ENCODE measurements at regions of chr2 and their contacts with region 1.

Region 1: DNA sequence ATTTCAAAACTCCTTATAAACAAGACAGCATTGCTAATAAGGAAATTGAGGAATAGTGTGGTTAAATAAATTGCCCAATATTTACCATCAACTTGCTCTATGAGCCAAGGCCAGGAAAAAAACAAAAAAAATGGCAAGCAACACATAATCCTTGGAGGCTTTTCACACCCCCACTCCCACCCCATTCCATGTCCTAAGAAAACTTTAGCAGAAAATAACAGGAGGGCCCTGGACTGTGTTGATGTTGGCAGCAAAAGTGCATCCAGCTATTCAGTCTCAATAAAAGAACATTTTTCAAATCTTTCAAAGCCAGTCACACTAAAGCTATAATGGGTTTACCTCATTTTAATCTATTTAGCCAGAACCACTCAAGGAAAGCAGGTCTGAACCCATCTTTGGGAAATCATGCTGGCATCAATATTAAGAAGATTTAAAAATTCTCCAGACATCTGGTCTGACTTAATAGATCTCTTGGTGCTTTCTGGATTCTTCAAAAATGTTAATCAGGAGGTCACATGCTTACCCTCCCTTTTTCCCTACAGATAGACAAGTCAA is 34.6 kb upstream of the STK17B start:
- DNase-seq: peak in 1 of 2 donors; percentile 58
- ATAC-seq: peak; percentile 68 to 77
- H3K4me3 ChIP-seq: no peak overlapping the region
- H3K27ac ChIP-seq: peak overlapping the region; percentile 1 to 47 (median 20)
- H3K4me1 ChIP-seq: peaks cover 0 to 6% of the 10 kb centered on the region in 2 donors
- H3K27me3 ChIP-seq: no peaks in the 10 kb centered on the region
- CTCF ChIP-seq: no peak
- POLR2A ChIP-seq: no peak

Region 2: DNA sequence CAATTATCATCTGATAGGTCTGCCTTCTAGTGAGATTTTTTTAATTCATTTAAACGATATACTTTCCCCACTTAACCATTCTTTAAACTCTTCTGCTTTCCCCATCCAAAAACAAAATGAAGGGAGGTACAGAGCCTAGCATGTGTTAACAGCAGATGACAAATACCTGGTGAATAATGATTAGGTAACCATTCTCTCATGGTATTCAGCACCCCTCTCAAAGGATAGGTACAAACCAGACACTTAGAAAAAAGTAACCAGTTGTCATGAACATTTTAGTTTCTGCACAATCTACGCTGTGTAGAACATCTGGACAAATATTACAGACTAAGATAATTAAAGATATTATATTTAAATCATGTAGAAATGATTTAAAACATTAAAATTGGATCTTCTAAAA is 193.6 kb before region 1 on chr2:
- in situ Hi-C with region 1: no loop called
- intact Hi-C with region 1: no loop called
- DNase-seq: no peak
- ATAC-seq: no peak
- H3K4me3 ChIP-seq: no peak overlapping the region
- H3K27ac ChIP-seq: no peak overlapping the region
- H3K4me1 ChIP-seq: no peaks in the 10 kb centered on the region
- H3K27me3 ChIP-seq: no peaks in the 10 kb centered on the region
- CTCF ChIP-seq: no peak
- POLR2A ChIP-seq: no peak

Region 3: DNA sequence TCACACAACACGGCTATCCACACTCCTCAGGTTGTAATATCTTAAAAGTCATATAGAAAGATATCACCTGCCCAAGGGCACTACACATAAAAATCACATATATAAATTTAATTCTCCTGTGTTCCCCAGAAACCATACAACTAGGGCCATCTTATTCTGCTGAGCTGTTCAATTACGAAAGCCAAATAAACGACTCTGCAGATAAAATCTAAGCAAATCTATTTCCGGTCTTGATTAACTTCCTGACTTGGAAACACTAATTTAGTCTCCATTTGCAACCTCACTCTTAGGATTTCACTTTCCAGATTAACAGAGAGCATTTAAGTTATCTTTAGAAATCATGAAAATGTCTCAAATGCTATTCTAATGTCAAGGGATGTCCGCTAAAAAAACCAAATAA is 10.7 kb before region 1 on chr2:
- in situ Hi-C with region 1: no loop called
- intact Hi-C with region 1: loop called (anchors 1 kb)
- DNase-seq: no peak
- ATAC-seq: no peak
- H3K4me3 ChIP-seq: no peak overlapping the region
- H3K27ac ChIP-seq: no peak overlapping the region
- H3K4me1 ChIP-seq: no peaks in the 10 kb centered on the region
- H3K27me3 ChIP-seq: no peaks in the 10 kb centered on the region
- CTCF ChIP-seq: no peak
- POLR2A ChIP-seq: no peak

Region 4: DNA sequence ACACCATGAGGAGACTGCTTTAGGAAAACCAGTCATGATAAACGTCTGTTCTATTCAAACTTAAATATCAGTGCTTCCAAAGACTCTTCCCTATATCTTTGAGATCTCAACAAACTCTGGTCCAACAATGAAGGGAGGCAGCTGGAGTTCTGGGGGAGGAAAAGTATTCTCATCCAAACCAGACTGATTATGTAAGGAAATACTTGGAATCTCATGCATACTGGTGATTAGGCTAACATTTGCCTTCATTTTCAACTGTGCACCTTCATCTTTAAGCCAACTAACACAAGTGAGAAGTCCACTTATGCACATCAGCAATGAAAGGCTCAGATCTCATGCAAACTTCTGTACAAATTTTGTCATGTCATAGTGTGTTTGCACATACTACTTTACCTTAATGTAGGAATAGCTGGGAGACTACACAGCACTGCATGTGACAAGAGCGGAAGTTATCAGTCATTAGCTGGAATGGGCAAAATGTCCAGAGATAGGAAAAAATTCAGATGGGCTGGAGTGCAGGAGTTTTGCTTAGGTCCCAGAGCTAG is 33.0 kb after region 1 on chr2:
- in situ Hi-C with region 1: no loop called
- intact Hi-C with region 1: no loop called
- DNase-seq: no peak
- ATAC-seq: no peak
- H3K4me3 ChIP-seq: no peak overlapping the region
- H3K27ac ChIP-seq: no peak overlapping the region
- H3K4me1 ChIP-seq: peaks cover 0 to 7% of the 10 kb centered on the region in 2 donors
- H3K27me3 ChIP-seq: no peaks in the 10 kb centered on the region
- CTCF ChIP-seq: no peak
- POLR2A ChIP-seq: no peak

Region 5: DNA sequence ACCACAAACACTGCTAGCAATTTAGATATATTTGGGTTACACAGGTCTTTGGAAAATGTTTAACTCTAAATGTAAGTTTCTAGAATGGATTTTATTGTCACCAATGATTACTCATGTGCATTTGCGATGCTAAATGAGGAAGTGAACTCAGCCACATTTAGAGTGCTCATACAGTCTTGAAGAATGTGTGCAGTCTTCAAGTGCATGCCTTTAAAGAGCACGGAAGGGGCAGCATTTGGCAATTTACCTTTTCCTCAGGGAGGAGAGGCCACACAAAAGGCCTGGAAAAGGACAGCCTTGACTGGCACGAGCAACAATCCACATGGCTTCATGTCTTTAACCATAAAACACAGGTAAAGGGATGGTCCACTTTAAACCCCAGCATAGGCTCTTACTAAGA is 43.9 kb after region 1 on chr2:
- in situ Hi-C with region 1: no loop called
- intact Hi-C with region 1: loop called (anchors 5 kb)
- DNase-seq: no peak
- ATAC-seq: no peak
- H3K4me3 ChIP-seq: no peak overlapping the region
- H3K27ac ChIP-seq: no peak overlapping the region
- H3K4me1 ChIP-seq: peaks cover 4 to 8% of the 10 kb centered on the region in 2 donors
- H3K27me3 ChIP-seq: no peaks in the 10 kb centered on the region
- CTCF ChIP-seq: no peak
- POLR2A ChIP-seq: no peak

Region 6: GRCh38 chr2:196277002-196277401 is 71.0 kb after region 1 on chr2:
- in situ Hi-C with region 1: no loop called
- intact Hi-C with region 1: no loop called
- DNase-seq: no peak
- ATAC-seq: no peak
- H3K4me3 ChIP-seq: no peak overlapping the region
- H3K27ac ChIP-seq: no peak overlapping the region
- H3K4me1 ChIP-seq: peaks cover 0 to 6% of the 10 kb centered on the region in 2 donors
- H3K27me3 ChIP-seq: no peaks in the 10 kb centered on the region
- CTCF ChIP-seq: peak in 4 of 5 experiments; percentile 6 to 46 (median 25)
- POLR2A ChIP-seq: no peak

Measured in gastrocnemius medialis (tissue), 4 donors.